B cell (primary cell): ENCODE measurements at regions of chr16 and their contacts with region 1.

Region 1: GRCh38 chr16:66751303-66751991 is at the start of gene DYNC1LI2:
- DNase-seq: peak; percentile 92
- ATAC-seq: peak; percentile 95
- H3K4me3 ChIP-seq: peak within 1 kb of the TSS; percentile 43 to 92 (median 88)
- H3K4me3 Mint-ChIP-seq: peak within 1 kb of the TSS; percentile 87
- H3K27ac ChIP-seq: peak within 1 kb of the TSS; percentile 13 to 85
- H3K27ac Mint-ChIP-seq: peak within 1 kb of the TSS; percentile 89
- H3K4me1 ChIP-seq: peaks cover 18 to 19% of the 10 kb centered on the region in 2 donors
- H3K4me1 Mint-ChIP-seq: peaks cover 33% of the 10 kb centered on the region
- H3K27me3 ChIP-seq: peaks cover 0 to 11% (median 8%) of the 10 kb centered on the region in 4 experiments
- H3K27me3 Mint-ChIP-seq: peaks cover 20% of the 10 kb centered on the region
- CTCF ChIP-seq: peak; percentile 87
- total RNA-seq, gene DYNC1LI2: 109 and 111 TPM in 2 replicates

Region 2: DNA sequence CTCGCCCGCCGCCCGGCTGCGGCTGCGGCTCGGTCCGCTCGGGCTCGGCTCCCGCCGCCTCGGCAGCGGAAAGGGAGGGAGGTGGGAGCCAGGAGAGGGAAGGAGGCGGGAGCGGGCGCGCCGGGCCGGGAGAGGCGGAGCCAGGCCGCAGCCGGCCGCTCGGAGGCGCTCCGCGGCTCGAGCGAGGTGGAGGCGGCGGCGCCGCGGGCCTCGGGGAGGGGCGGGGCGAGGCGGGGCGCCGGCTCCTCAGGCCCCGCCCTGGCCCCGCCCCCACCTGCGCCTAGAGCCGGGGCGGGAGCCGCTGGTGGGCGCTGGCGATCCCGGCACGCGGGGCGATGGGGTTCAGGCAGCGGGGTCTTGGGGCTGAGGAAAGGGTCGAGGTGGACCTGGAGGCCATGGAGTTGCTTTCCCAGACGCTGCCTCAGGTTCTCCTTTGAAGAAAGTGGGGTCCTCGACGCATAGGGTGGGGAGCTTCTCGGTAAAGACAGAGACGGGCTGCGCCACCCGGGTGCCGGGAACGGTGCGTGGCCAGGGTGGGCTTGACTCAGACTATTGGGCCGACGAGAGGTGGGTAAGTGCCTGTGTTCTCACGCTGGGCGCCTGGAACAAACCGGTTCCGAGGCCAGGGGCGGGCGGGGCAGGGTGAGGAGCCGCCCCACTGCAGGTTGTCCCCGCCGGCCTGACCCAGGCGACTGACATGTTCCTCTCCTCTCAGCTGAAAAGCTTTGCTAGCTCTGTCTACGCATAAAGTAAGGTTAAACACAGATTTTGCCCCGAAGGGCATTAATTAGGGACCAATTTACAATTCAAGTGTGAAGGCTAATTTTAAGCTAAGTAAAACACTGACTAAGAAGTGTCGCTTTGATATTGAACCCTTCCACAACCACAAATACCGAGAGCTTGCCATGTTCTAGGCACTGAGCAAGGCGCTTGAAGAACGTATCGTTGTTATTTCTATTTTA is 54.5 kb before region 1 on chr16 and contains the start of gene CMTM4:
- CTCF ChIA-PET with region 1: interaction called, 4 read pairs
- POLR2A ChIA-PET with region 1: no interaction called
- intact Hi-C with region 1: loop called (anchors 1 kb)
- DNase-seq: peak; percentile 89
- ATAC-seq: peak; percentile 98
- H3K4me3 ChIP-seq: peak within 1 kb of the TSS; percentile 34 to 83 (median 57)
- H3K4me3 Mint-ChIP-seq: peak within 1 kb of the TSS; percentile 88
- H3K27ac ChIP-seq: no peak within 1 kb of the TSS
- H3K27ac Mint-ChIP-seq: peak within 1 kb of the TSS; percentile 15
- H3K4me1 ChIP-seq: peaks cover 15 to 17% of the 10 kb centered on the region in 2 donors
- H3K4me1 Mint-ChIP-seq: peaks cover 17% of the 10 kb centered on the region
- H3K27me3 ChIP-seq: peaks cover 0 to 53% (median 30%) of the 10 kb centered on the region in 4 experiments
- H3K27me3 Mint-ChIP-seq: peaks cover 30% of the 10 kb centered on the region
- CTCF ChIP-seq: peak; percentile 32
- total RNA-seq, gene CMTM4: 0.59 and 0.68 TPM in 2 replicates

Region 3: DNA sequence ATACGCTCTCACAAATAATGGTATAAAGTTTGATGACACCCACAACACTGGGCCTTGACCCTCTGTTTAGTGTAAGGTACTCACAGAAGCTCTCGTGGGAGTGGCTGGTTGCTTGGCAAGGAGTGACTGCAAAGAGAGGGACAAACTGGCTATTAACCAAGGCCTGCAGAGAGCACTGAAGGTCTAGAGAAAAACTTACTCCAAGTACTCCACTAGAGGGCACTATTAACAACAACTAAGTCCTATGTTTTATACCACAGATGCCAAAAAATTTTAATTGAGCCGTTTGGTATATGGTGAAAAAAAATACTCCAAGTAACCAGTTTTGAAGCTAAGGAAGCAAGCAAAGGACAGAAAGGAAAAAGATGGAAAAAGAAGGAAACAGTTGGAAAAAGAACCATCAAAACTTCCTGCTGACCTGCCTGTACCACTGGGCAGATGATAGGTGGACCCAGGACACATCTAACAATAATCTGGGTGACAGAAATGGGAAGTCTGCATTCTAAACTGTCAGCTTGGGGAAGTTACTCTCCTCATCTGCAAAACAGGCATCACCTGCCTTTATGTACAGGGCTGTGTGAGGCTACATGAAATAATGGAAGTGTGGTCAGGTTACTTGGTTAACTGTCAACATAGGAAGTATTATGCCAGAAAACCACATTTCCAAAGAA is 23.2 kb before region 1 on chr16:
- CTCF ChIA-PET with region 1: interaction called, 10 read pairs
- POLR2A ChIA-PET with region 1: no interaction called
- intact Hi-C with region 1: no loop called
- DNase-seq: peak; percentile 60
- ATAC-seq: peak; percentile 57
- H3K4me3 ChIP-seq: no peak overlapping the region
- H3K4me3 Mint-ChIP-seq: no peak overlapping the region
- H3K27ac ChIP-seq: no peak overlapping the region
- H3K27ac Mint-ChIP-seq: no peak overlapping the region
- H3K4me1 ChIP-seq: no peaks in the 10 kb centered on the region
- H3K4me1 Mint-ChIP-seq: peaks cover 3% of the 10 kb centered on the region
- H3K27me3 ChIP-seq: no peaks in the 10 kb centered on the region
- H3K27me3 Mint-ChIP-seq: no peaks in the 10 kb centered on the region
- CTCF ChIP-seq: peak; percentile 83

Region 4: GRCh38 chr16:66830422-66831404 is 79.3 kb after region 1 on chr16 and contains the start of gene NAE1:
- CTCF ChIA-PET with region 1: interaction called, 8 read pairs
- POLR2A ChIA-PET with region 1: no interaction called
- intact Hi-C with region 1: loop called (anchors 2 kb)
- DNase-seq: peak; percentile 95
- ATAC-seq: peak; percentile 98
- H3K4me3 ChIP-seq: peak within 1 kb of the TSS; percentile 57 to 87 (median 79)
- H3K4me3 Mint-ChIP-seq: peak within 1 kb of the TSS; percentile 77
- H3K27ac ChIP-seq: peak within 1 kb of the TSS in 1 of 2 donors; percentile 76
- H3K27ac Mint-ChIP-seq: peak within 1 kb of the TSS; percentile 67
- H3K4me1 ChIP-seq: peaks cover 10 to 22% of the 10 kb centered on the region in 2 donors
- H3K4me1 Mint-ChIP-seq: peaks cover 25% of the 10 kb centered on the region
- H3K27me3 ChIP-seq: peaks cover 0 to 3% (median 0%) of the 10 kb centered on the region in 4 experiments
- H3K27me3 Mint-ChIP-seq: peaks cover 5% of the 10 kb centered on the region
- CTCF ChIP-seq: peak; percentile 99
- total RNA-seq, gene NAE1: 57.6 and 62.5 TPM in 2 replicates

Region 5: GRCh38 chr16:66880288-66881013 is 129.0 kb after region 1 on chr16 and contains the start of gene PDP2:
- CTCF ChIA-PET with region 1: interaction called, 4 read pairs
- POLR2A ChIA-PET with region 1: no interaction called
- intact Hi-C with region 1: loop called (anchors 1 kb)
- DNase-seq: peak; percentile 94
- ATAC-seq: peak; percentile 99
- H3K4me3 ChIP-seq: peak within 1 kb of the TSS; percentile 25 to 91 (median 85)
- H3K4me3 Mint-ChIP-seq: peak within 1 kb of the TSS; percentile 98
- H3K27ac ChIP-seq: peak within 1 kb of the TSS; percentile 6 to 46
- H3K27ac Mint-ChIP-seq: peak within 1 kb of the TSS; percentile 92
- H3K4me1 ChIP-seq: peaks cover 4 to 16% of the 10 kb centered on the region in 2 donors
- H3K4me1 Mint-ChIP-seq: peaks cover 17% of the 10 kb centered on the region
- H3K27me3 ChIP-seq: no peaks in the 10 kb centered on the region
- H3K27me3 Mint-ChIP-seq: no peaks in the 10 kb centered on the region
- CTCF ChIP-seq: no peak
- total RNA-seq, gene PDP2: 15.0 and 18.7 TPM in 2 replicates

Region 6: DNA sequence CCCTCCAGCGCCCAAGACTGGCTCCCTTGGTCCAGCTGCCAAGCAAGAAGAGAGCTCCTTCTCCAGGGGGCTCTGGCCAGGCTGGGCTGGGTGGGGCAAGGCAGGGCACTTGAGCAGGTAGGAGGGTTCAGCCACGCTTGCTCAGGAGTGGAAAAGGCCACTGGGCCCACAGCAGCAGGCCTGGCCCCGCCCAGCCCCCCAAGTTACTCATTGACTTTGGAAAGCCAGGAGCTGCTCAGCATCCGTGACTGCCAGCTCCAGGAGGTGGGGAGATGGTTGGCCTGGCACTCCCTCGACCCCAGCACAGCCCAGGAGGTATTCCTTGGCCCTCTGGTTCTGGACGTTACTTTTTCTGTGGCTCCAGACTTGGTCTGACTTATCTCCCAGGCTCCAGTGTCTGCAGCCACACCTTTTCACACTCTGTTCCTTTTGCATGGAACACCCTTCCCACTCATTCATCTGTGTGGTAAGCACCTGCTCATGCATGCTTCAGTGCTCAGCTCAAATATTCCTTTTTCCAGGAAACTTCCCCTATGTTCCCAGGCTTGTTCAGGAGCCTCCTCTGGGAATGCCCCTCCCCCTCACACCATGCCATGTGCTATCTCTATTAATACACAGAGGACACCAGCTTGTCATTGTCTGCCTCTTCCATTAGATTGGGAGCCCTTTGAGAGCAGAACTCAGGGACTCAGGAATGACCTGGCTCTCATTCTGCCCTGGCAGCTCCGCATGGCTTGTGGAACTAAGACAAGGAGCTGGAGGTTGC is 167.5 kb after region 1 on chr16 and contains the start of gene CDH16:
- CTCF ChIA-PET with region 1: no interaction called
- POLR2A ChIA-PET with region 1: no interaction called
- intact Hi-C with region 1: no loop called
- DNase-seq: no peak
- ATAC-seq: no peak
- H3K4me3 ChIP-seq: no peak within 1 kb of the TSS
- H3K4me3 Mint-ChIP-seq: no peak within 1 kb of the TSS
- H3K27ac ChIP-seq: no peak within 1 kb of the TSS
- H3K27ac Mint-ChIP-seq: no peak within 1 kb of the TSS
- H3K4me1 ChIP-seq: no peaks in the 10 kb centered on the region
- H3K4me1 Mint-ChIP-seq: peaks cover 1% of the 10 kb centered on the region
- H3K27me3 ChIP-seq: peaks cover 0 to 15% (median 4%) of the 10 kb centered on the region in 4 experiments
- H3K27me3 Mint-ChIP-seq: peaks cover 25% of the 10 kb centered on the region
- CTCF ChIP-seq: no peak
- total RNA-seq, gene CDH16: not detected in 2 replicates

Region 7: DNA sequence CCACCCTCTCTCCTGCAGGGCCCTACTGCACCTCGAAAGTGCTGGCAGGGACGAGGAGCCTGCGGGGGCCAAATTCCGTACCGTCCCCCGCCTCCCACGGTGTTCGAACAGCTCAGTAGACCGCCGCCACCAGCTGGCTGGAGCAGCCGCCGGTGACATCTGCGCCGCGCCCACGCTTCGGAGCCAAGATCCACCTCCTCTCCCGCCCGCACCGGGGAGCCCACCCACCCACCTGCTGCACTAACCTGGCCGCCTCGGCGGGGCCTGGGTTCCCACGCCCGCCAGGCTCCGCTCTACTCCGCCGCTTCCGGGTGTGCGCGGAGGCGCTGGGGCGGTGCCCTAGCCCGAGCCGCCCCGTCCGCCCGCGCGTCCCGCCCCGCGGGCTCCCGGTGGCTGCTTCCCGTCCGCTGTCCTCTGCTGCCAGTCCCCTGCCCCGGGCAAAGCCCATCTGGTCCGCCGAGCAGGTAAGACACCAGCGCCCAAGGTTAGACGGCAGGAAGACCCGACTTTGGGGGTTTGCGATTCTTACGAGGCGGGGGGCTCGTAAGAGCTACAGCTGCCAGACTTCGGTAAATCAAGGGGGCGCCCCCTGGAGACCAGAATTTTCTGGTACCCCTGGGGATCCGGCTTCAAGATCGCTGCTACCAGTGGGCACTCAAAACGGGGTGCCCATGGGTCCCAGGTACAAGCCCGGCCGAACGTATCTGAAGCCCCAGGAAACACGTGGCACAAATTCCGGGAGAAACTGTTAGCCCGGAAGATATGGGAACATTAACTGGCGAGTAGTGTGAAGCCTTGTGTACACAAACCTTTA is 408.4 kb after region 1 on chr16 and contains the starts of genes FBXL8 and TRADD:
- CTCF ChIA-PET with region 1: no interaction called
- POLR2A ChIA-PET with region 1: no interaction called
- intact Hi-C with region 1: no loop called
- DNase-seq: peak; percentile 90
- ATAC-seq: peak; percentile 69
- H3K4me3 ChIP-seq: peak within 1 kb of the TSS; percentile 67 to 98 (median 96)
- H3K4me3 Mint-ChIP-seq: peak within 1 kb of the TSS; percentile 92
- H3K27ac ChIP-seq: peak within 1 kb of the TSS; percentile 97 to 99
- H3K27ac Mint-ChIP-seq: peak within 1 kb of the TSS; percentile 97
- H3K4me1 ChIP-seq: peaks cover 61 to 76% of the 10 kb centered on the region in 2 donors
- H3K4me1 Mint-ChIP-seq: peaks cover 60% of the 10 kb centered on the region
- H3K27me3 ChIP-seq: peaks cover 0 to 44% (median 21%) of the 10 kb centered on the region in 4 experiments
- H3K27me3 Mint-ChIP-seq: peaks cover 19% of the 10 kb centered on the region
- CTCF ChIP-seq: peak; percentile 67
- total RNA-seq, gene FBXL8: 5.1 and 5.8 TPM in 2 replicates
- total RNA-seq, gene TRADD: 51.9 and 52.4 TPM in 2 replicates

Region 8: GRCh38 chr16:67521095-67521804 is 769.8 kb after region 1 on chr16:
- CTCF ChIA-PET with region 1: no interaction called
- POLR2A ChIA-PET with region 1: no interaction called
- intact Hi-C with region 1: no loop called
- DNase-seq: peak; percentile 99
- ATAC-seq: peak; percentile 71
- H3K4me3 ChIP-seq: peak overlapping the region; percentile 47 to 74 (median 61)
- H3K4me3 Mint-ChIP-seq: peak overlapping the region; percentile 94
- H3K27ac ChIP-seq: peak overlapping the region; percentile 96 to 97
- H3K27ac Mint-ChIP-seq: peak overlapping the region; percentile 99
- H3K4me1 ChIP-seq: peaks cover 44 to 69% of the 10 kb centered on the region in 2 donors
- H3K4me1 Mint-ChIP-seq: peaks cover 77% of the 10 kb centered on the region
- H3K27me3 ChIP-seq: no peaks in the 10 kb centered on the region
- H3K27me3 Mint-ChIP-seq: no peaks in the 10 kb centered on the region
- CTCF ChIP-seq: peak; percentile 87